ENCODE measurements at regions of chrX and their contacts with region 1.

Region 1: DNA sequence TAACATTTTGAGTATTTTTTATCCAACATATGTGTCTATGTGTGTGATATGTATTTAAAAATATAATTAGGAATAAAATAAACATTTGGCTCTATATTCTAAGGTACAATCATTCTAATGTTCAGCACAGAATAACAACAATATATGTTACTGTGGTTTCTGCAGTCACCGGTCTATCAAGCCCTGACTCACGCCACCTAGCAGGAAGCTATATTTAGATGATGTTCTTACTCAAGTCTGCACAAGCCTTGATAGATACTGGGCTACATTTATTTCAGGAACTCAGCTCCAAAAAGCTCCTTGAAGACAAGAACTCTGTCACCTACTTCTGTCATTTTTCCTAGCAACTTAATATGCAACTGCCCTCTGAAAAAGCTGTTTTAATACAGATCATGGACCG is 152.0 kb upstream of the FTHL17 start:
- DNase-seq: no peak
- H3K4me3 Mint-ChIP-seq: no peak overlapping the region
- H3K27ac Mint-ChIP-seq: no peak overlapping the region
- H3K4me1 Mint-ChIP-seq: no peaks in the 10 kb centered on the region
- H3K27me3 Mint-ChIP-seq: no peaks in the 10 kb centered on the region

Region 2: GRCh38 chrX:30971774-30972603 is 251.8 kb before region 1 on chrX:
- CTCF ChIA-PET with region 1: no interaction called
- POLR2A ChIA-PET with region 1: no interaction called
- intact Hi-C with region 1: loop called (anchors 10 kb)
- DNase-seq: peak; percentile 19
- H3K4me3 Mint-ChIP-seq: peak overlapping the region; percentile 57
- H3K27ac Mint-ChIP-seq: no peak overlapping the region
- H3K4me1 Mint-ChIP-seq: peaks cover 11% of the 10 kb centered on the region
- H3K27me3 Mint-ChIP-seq: no peaks in the 10 kb centered on the region

Region 3: DNA sequence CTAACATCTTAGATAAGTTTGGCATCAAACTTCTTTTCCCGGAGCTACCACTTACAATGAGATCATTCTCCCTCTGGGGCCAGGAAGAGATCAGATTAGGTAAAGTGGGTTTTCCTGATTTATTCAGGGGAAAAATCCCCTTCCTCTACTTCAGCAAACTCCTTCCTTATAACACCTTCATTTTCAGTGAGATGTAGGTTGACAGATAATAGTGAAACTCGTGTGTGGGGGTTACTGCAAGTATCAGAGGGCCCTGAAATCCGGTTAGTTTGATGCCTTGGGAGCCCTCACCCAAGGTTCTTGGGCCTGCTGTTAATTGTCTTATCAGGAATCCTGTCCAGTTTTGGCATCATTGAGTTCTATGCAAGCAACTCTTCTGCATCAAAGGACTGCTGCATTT is 162.7 kb before region 1 on chrX:
- CTCF ChIA-PET with region 1: no interaction called
- POLR2A ChIA-PET with region 1: no interaction called
- intact Hi-C with region 1: loop called (anchors 2 kb)
- DNase-seq: no peak
- H3K4me3 Mint-ChIP-seq: no peak overlapping the region
- H3K27ac Mint-ChIP-seq: no peak overlapping the region
- H3K4me1 Mint-ChIP-seq: peaks cover 10% of the 10 kb centered on the region
- H3K27me3 Mint-ChIP-seq: no peaks in the 10 kb centered on the region

Region 4: GRCh38 chrX:31178064-31178768 is 45.6 kb before region 1 on chrX:
- CTCF ChIA-PET with region 1: no interaction called
- POLR2A ChIA-PET with region 1: no interaction called
- intact Hi-C with region 1: loop called (anchors 5 kb)
- DNase-seq: no peak
- H3K4me3 Mint-ChIP-seq: no peak overlapping the region
- H3K27ac Mint-ChIP-seq: no peak overlapping the region
- H3K4me1 Mint-ChIP-seq: peaks cover 6% of the 10 kb centered on the region
- H3K27me3 Mint-ChIP-seq: no peaks in the 10 kb centered on the region

Region 5: GRCh38 chrX:31271615-31272471 is 48.0 kb after region 1 on chrX:
- CTCF ChIA-PET with region 1: no interaction called
- POLR2A ChIA-PET with region 1: no interaction called
- intact Hi-C with region 1: no loop called
- DNase-seq: no peak
- H3K4me3 Mint-ChIP-seq: no peak overlapping the region
- H3K27ac Mint-ChIP-seq: no peak overlapping the region
- H3K4me1 Mint-ChIP-seq: no peaks in the 10 kb centered on the region
- H3K27me3 Mint-ChIP-seq: peaks cover 4% of the 10 kb centered on the region

Region 6: DNA sequence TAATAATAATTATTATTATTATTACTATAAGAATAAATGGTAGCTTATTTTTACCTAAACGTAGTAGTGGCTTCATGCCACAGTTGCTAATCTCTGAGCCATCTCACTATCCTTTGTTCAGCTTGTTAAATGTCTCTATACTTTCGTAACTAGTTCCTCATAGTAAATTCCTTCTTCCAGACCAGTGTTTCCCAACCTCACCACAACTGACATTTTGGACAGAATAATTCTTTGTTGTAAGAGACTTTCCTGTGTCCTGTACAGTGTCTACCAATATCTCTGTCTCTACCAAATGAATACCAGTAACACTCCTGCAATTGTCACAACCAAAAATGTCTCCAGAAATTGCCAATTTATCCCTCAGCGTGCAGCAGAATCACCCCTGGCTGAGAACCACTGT is 946.7 kb after region 1 on chrX:
- CTCF ChIA-PET with region 1: no interaction called
- POLR2A ChIA-PET with region 1: no interaction called
- intact Hi-C with region 1: no loop called
- DNase-seq: no peak
- H3K4me3 Mint-ChIP-seq: no peak overlapping the region
- H3K27ac Mint-ChIP-seq: no peak overlapping the region
- H3K4me1 Mint-ChIP-seq: no peaks in the 10 kb centered on the region
- H3K27me3 Mint-ChIP-seq: no peaks in the 10 kb centered on the region